ENCODE measurements at regions of chr4 and their contacts with region 1.

Region 1: DNA sequence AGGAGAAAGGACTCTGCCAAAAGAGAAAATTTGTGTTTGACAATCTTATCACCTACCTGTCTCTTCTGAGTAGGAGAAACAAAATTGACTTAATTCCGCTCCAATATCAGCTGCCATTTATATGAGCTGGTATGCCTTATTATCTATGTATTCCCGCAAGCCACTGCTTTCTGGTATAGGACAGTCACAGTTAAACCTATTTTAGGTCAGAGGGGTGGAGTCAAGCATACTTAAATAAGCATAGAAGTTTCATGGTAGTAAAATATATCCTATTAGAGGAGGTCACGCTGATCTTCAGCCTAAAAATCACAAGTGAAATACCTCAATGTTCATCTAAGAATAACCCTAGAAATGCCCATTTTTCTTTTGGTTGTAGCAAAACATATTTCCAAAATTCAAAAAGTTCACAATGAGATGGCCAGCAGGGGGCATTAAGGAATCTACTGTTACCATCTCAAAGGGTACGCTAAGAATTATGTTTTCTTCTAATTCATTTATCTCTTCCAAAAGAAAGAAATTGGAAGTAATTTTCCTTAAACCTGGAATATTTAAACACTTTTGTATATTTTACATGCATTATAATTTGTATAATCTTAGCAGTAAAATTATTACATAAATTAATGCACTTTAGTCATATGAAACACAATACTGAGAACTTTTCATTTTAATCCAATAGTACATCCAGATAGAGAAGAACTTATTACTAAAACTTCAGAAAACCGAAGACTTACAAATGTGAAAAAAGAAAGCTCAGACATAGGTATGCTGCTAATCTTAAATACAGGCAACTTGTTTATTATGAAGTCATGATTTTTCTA is 10.5 kb downstream of the PPAT start:
- DNase-seq: peak in 1 of 10 donors; percentile 31
- H3K4me3 ChIP-seq: peak overlapping the region in 3 of 59 donors; percentile 2 to 33 (median 14)
- H3K27ac ChIP-seq: no peak overlapping the region
- H3K27me3 ChIP-seq: no peaks in the 10 kb centered on the region
- CTCF ChIP-seq: peak; percentile 44 to 84 (median 74)

Region 2: GRCh38 chr4:55051532-55051931 is 1373.4 kb before region 1 on chr4:
- intact Hi-C with region 1: no loop called
- DNase-seq: no peak
- H3K4me3 ChIP-seq: no peak overlapping the region
- H3K27ac ChIP-seq: no peak overlapping the region
- H3K27me3 ChIP-seq: no peaks in the 10 kb centered on the region
- CTCF ChIP-seq: no peak

Region 3: DNA sequence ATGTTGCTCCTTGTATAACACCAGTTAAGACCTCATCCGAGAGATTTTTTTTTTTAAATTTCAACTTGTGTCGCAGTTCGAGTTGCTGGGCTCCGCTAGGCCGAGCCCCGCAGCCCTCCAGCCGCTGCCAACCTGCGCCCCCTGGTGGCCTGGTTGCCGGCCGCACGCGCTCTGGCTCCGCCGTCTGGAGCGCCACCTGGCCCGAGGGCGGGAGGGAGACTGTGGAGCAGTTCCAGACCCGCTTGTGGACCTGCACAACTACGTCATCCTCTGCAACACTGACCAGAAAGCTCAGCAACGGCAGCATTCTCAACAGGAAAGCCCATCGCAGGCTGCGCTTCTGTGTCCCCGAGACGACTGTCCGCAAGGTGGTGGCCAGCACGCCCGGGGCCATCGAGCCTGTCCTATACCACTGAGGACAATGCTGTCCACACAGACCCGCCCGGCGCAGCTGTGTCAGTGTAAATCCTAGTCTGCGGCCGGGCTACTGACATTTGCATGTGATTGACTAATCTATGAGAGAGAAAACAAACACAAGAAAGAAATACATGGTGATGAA is 119.7 kb after region 1 on chr4:
- intact Hi-C with region 1: loop called in 1 of 2 experiments (anchors 5 kb)
- DNase-seq: peak; percentile 79 to 94 (median 87)
- H3K4me3 ChIP-seq: peak overlapping the region; percentile 34 to 76 (median 55)
- H3K27ac ChIP-seq: peak overlapping the region in 57 of 59 donors; percentile 50 to 96 (median 85)
- H3K27me3 ChIP-seq: no peaks in the 10 kb centered on the region
- CTCF ChIP-seq: peak; percentile 83 to 100 (median 99)

Region 4: DNA sequence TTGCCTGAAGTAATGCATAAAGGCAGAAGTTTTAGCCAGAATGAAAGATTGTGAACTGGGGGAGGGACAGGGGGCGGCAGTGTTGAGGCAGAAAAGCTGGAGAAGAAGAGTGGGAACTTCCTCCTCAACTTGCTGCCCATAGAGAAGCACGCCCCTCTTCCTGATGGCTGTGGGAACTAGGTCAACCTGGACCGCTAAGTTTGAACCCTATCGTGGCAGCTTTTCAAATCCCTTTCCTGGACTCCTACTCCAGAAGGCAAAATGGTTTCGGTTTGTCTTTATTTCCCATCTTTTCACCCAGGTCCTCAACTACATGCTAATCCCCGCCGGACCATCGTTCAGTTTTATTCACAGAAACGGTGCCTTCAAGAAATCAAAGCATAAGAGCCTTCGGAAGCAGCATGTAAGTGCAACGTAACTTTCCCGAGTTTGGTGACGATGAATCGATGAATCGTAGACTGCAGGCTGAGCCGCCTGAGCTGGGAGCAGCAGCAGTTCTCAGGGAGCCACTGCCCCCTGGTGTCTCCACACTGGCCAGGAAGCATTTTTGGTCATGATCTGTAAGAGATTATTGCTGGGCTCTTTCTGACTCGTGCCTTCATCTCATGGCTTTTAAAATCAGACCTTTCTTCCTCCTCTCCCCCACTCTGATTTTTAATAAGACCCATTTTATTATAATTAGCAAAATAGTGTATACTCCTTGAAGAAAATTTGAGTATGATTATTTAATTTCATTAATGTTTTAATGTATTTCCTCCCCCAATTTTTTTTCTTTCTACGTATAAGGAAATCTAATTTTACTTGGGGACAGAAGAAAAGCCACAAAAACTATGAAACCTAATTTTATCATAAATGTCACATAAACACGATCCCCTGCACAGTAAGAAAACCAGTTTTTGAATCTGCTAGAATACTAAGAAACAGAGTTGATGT is 375.2 kb after region 1 on chr4:
- intact Hi-C with region 1: loop called (anchors 2 to 10 kb)
- DNase-seq: peak; percentile 40 to 91 (median 87)
- H3K4me3 ChIP-seq: peak overlapping the region; percentile 49 to 83 (median 70)
- H3K27ac ChIP-seq: peak overlapping the region in 51 of 59 donors; percentile 3 to 89 (median 74)
- H3K27me3 ChIP-seq: no peaks in the 10 kb centered on the region
- CTCF ChIP-seq: peak; percentile 62 to 96 (median 87)

Region 5: GRCh38 chr4:56828784-56829535 is 404.1 kb after region 1 on chr4:
- intact Hi-C with region 1: loop called in 1 of 2 experiments (anchors 10 kb)
- DNase-seq: no peak
- H3K4me3 ChIP-seq: no peak overlapping the region
- H3K27ac ChIP-seq: no peak overlapping the region
- H3K27me3 ChIP-seq: no peaks in the 10 kb centered on the region
- CTCF ChIP-seq: no peak

Region 6: DNA sequence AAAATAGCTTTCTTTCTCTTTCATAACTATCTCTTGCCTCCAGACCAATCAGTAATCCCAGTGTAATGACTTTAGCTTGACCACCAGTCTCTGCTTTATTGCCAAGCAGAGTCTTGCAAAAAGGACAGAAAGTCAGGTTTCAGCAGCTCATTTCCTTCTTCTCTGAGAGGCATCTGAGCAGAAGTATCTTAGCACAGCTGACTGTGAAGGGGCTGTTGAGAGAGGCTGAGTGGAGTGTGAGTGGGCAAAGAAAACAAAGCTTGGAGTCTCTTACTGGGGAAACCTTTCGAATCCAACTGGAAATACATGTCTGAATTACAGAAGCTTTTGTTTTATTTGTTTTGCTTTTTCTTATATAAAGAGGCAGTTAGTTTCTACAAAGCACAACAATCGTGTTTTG is 855.6 kb after region 1 on chr4:
- intact Hi-C with region 1: no loop called
- DNase-seq: no peak
- H3K4me3 ChIP-seq: no peak overlapping the region
- H3K27ac ChIP-seq: no peak overlapping the region
- H3K27me3 ChIP-seq: no peaks in the 10 kb centered on the region
- CTCF ChIP-seq: no peak

Measured in dorsolateral prefrontal cortex (tissue), 120 donors.